AG04449 (cell line): ENCODE measurements at regions of chr2 and their contacts with region 1.

Region 1: GRCh38 chr2:25851740-25852503 is 26.4 kb downstream of the ASXL2 start:
- DNase-seq: peak; percentile 74
- H3K4me3 ChIP-seq: no peak overlapping the region
- CTCF ChIP-seq: peak; percentile 44

Region 2: GRCh38 chr2:25372419-25373268 is 479.3 kb before region 1 on chr2:
- CTCF ChIA-PET with region 1: no interaction called
- POLR2A ChIA-PET with region 1: no interaction called
- DNase-seq: no peak
- H3K4me3 ChIP-seq: no peak overlapping the region
- CTCF ChIP-seq: no peak

Region 3: DNA sequence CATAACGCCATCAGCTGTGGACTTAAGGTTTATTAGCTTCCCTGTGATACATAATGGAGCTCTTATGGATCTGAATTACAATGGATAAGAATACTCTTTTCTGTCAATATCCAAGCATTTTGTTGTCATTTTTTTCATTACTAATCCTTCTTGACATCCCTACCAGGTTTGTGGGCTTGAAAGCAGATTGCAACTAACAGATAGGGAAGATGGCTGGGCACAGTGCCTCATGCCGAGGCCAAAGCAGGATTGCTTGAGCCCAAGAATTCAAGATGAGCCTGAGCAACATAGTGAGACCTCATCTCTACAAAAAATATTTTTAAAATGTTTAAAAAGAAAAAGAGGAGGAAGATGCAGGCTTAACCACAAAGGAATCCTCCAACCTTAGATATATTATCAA is 16.0 kb before region 1 on chr2:
- CTCF ChIA-PET with region 1: interaction called, 37 read pairs
- POLR2A ChIA-PET with region 1: no interaction called
- DNase-seq: no peak
- H3K4me3 ChIP-seq: no peak overlapping the region
- CTCF ChIP-seq: no peak

Region 4: GRCh38 chr2:25867396-25868003 is 15.6 kb after region 1 on chr2:
- CTCF ChIA-PET with region 1: interaction called, 152 read pairs
- POLR2A ChIA-PET with region 1: no interaction called
- DNase-seq: no peak
- H3K4me3 ChIP-seq: no peak overlapping the region
- CTCF ChIP-seq: no peak

Region 5: DNA sequence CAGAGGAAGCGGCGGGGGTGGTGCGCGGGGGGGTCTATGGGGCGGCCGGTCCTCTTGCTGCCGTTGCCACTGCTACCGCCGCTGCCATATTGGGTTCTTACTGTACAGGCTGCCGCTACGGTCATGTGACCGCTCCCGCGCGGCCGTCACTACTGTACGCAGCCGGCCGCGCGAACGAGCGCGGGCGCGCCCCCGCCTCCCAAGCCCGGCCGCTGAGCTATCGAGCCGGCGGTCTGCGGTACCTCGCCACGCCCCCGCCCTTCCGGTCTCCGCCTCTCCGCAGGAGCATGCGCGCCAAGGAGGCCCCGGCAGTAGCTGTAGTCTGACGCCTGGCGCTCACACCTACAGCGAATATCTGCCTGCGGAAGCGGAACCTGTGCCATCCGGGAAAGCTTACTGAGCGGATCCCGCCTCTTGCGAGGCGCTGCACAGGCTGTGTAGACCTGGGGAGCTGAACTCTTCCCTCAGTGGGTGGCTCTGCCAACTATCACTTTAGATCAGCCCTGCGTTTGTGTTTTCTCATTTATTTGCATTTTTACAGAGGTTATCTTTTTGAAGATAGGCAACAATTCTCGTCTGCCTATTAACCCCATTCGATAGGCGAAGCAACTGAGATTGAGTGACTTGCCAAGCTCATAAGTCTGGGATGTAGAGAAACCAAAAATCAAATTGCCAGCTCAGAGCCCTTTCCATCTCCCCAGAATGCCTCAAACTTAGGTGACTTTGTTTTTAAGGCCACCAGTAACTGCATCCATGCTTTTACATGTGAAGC is 26.6 kb after region 1 on chr2 and contains the start of gene ASXL2:
- CTCF ChIA-PET with region 1: interaction called, 21 read pairs
- POLR2A ChIA-PET with region 1: interaction called, 4 read pairs
- DNase-seq: peak; percentile 64
- H3K4me3 ChIP-seq: peak within 1 kb of the TSS; percentile 93
- CTCF ChIP-seq: no peak